Colonic mucosa (tissue), 4 donors: ENCODE measurements at regions of chr1 and their contacts with region 1.

Region 1: GRCh38 chr1:67149179-67149770 is 14.5 kb upstream of the C1orf141 start:
- DNase-seq: peak; percentile 81
- H3K4me3 ChIP-seq: no peak overlapping the region
- H3K27ac ChIP-seq: no peak overlapping the region
- H3K4me1 ChIP-seq: peaks cover 5% of the 10 kb centered on the region
- H3K27me3 ChIP-seq: no peaks in the 10 kb centered on the region
- CTCF ChIP-seq: peak; percentile 88

Region 2: GRCh38 chr1:66764994-66765578 is 384.2 kb before region 1 on chr1:
- intact Hi-C with region 1: loop called (anchors 5 kb)
- DNase-seq: peak; percentile 59
- H3K4me3 ChIP-seq: no peak overlapping the region
- H3K27ac ChIP-seq: no peak overlapping the region
- H3K4me1 ChIP-seq: no peaks in the 10 kb centered on the region
- H3K27me3 ChIP-seq: no peaks in the 10 kb centered on the region
- CTCF ChIP-seq: peak; percentile 62

Region 3: GRCh38 chr1:66996018-66996682 is 153.1 kb before region 1 on chr1:
- intact Hi-C with region 1: loop called (anchors 2 kb)
- DNase-seq: peak; percentile 75
- H3K4me3 ChIP-seq: no peak overlapping the region
- H3K27ac ChIP-seq: no peak overlapping the region
- H3K4me1 ChIP-seq: no peaks in the 10 kb centered on the region
- H3K27me3 ChIP-seq: no peaks in the 10 kb centered on the region
- CTCF ChIP-seq: peak; percentile 56

Region 4: GRCh38 chr1:67053785-67054772 is 95.2 kb before region 1 on chr1 and contains the start of gene SLC35D1:
- intact Hi-C with region 1: loop called (anchors 5 kb)
- DNase-seq: peak; percentile 90
- H3K4me3 ChIP-seq: peak within 1 kb of the TSS; percentile 67
- H3K27ac ChIP-seq: peak within 1 kb of the TSS; percentile 92
- H3K4me1 ChIP-seq: peaks cover 16% of the 10 kb centered on the region
- H3K27me3 ChIP-seq: no peaks in the 10 kb centered on the region
- CTCF ChIP-seq: no peak
- total RNA-seq, gene SLC35D1: 48.1 to 75.9 TPM